HEK293 (cell line): ENCODE measurements at regions of chr17 and their contacts with region 1.

Region 1: DNA sequence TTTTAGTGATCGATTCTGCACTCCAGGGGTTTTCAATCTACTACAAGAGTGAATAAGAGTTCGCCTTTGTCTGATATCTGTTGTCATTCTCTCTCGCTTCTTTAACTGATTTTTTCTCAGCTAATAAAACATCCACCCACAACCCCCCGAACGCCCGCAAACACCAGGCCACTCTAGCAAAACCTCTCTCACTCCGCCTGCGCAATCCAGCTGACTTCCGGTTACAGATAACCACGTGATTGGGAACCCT is 338 bp upstream of the RPL19 start:
- H3K4me3 ChIP-seq: peak overlapping the region; percentile 96
- H3K27ac ChIP-seq: peak overlapping the region; percentile 99
- H3K4me1 ChIP-seq: peaks cover 17% of the 10 kb centered on the region; the same call in 1 of the 2 replicates
- CTCF ChIP-seq: no peak

Region 2: DNA sequence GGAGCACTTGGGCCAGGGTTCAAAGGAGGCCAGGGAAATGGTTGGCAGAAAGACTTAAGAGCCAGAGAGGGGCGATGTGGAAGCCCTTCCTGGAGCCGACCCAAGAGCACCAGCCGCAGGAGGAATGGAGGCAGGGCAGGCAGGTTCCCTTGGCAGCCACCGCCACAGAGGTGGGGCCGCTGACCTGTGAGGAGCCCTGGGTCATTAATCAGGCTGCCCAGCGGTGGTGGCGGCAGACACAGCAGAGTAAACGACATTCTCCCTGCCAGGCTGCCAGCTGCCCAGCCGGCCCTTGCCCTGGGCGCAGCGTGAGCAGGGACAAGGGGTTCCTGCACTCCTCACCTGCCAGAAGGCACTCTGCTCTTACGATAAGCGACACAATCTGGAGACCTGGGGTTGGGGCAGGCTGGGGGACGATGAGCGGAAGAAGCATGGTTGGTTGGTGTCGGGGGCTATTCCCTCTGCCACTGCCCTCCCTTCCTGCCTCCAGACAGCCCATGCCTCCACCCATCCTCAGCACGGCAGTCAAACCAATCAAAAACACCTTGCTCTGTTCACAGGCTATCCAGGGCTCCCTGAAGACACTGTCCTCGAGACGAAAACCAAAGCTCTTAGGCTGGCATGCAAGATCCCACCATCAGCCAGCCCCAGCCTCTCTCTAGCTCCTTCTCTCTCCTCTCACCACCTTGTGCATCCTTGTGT is 89.2 kb before region 1 on chr17:
- CTCF ChIA-PET with region 1: no interaction called
- POLR2A ChIA-PET with region 1: no interaction called
- H3K4me3 ChIP-seq: no peak overlapping the region
- H3K27ac ChIP-seq: no peak overlapping the region
- H3K4me1 ChIP-seq: no peaks in the 10 kb centered on the region
- CTCF ChIP-seq: no peak

Region 3: DNA sequence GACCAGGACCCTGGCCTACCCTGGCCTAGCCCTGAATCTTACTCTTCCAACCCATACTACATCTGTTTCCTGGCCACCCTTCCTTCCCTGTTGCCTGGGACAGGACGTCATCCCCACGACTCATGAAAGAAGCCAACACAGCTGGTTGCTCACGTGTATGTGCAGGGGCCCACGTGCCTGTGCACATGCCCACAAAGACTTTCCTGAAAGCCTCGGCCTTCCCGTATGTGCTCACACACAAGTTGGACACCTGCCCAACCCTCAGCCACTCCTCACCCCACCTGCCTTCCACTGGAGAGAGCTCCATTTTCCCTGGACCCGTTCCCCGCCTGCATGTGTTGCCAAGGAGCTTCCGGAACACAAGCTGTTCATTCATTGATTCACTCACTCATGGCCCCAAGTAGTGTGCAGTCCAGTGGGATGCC is 55.3 kb before region 1 on chr17:
- CTCF ChIA-PET with region 1: no interaction called
- POLR2A ChIA-PET with region 1: no interaction called
- H3K4me3 ChIP-seq: no peak overlapping the region
- H3K27ac ChIP-seq: no peak overlapping the region
- H3K4me1 ChIP-seq: no peaks in the 10 kb centered on the region
- CTCF ChIP-seq: no peak

Region 4: GRCh38 chr17:39174907-39175694 is 24.6 kb before region 1 on chr17:
- CTCF ChIA-PET with region 1: interaction called, 28 read pairs
- POLR2A ChIA-PET with region 1: interaction called, 22 read pairs
- H3K4me3 ChIP-seq: no peak overlapping the region
- H3K27ac ChIP-seq: peak overlapping the region; percentile 11; the same call in 1 of the 2 replicates
- H3K4me1 ChIP-seq: 0 out of 2 replicates have a peak, but pooled peaks cover 7% of the 10 kb centered on the region
- CTCF ChIP-seq: peak; percentile 78

Region 5: DNA sequence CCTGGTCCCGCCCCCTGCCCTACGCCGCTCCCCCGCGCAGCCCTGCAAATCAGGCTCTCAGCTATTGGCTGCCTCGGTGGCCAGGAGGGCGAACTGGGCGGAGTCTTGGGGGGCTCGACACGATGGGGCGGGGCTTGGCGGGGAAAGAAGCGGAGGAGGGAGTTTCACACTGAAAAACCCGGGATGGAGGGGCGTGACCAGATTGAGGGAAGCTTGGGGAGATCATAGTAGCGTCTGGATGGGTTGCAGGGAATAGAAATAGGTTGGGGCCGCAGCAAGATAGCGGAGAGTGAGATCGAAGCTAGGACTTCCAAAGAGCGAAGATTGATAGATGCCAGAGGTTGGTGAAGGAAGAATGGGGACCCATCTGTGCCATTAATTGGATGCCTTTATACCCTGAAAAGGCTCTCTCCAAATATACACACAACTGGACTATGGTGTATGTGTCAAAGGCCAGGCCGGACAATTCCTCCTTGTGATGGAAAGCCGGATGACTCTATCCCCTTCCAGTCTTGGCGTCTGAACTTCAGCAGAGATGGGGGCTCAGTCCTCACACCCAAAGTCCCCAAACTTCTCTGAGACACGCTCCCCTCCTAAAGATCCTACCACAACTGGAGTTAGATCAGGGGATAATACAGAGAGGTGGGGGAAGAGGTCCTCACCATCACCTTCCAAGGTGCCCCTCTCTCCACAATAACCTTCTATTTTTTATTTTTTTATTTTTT is 26.4 kb after region 1 on chr17:
- CTCF ChIA-PET with region 1: interaction called, 733 read pairs
- POLR2A ChIA-PET with region 1: interaction called, 19 read pairs
- H3K4me3 ChIP-seq: peak overlapping the region; percentile 30
- H3K27ac ChIP-seq: no peak overlapping the region
- H3K4me1 ChIP-seq: peaks cover 6% of the 10 kb centered on the region
- CTCF ChIP-seq: no peak

Region 6: GRCh38 chr17:39244600-39245570 is 45.1 kb after region 1 on chr17:
- CTCF ChIA-PET with region 1: interaction called, 733 read pairs
- POLR2A ChIA-PET with region 1: interaction called, 72 read pairs
- H3K4me3 ChIP-seq: no peak overlapping the region
- H3K27ac ChIP-seq: no peak overlapping the region
- H3K4me1 ChIP-seq: no peaks in the 10 kb centered on the region; the same call in 1 of the 2 replicates
- CTCF ChIP-seq: peak; percentile 91

Region 7: GRCh38 chr17:39699818-39700147 is 500.0 kb after region 1 on chr17 and contains the start of gene ERBB2:
- CTCF ChIA-PET with region 1: no interaction called
- POLR2A ChIA-PET with region 1: no interaction called
- H3K4me3 ChIP-seq: peak within 1 kb of the TSS; percentile 81
- H3K27ac ChIP-seq: peak within 1 kb of the TSS; percentile 68; the same call in 1 of the 2 replicates
- H3K4me1 ChIP-seq: peaks cover 13% of the 10 kb centered on the region; the same call in 1 of the 2 replicates
- CTCF ChIP-seq: no peak